ENCODE measurements at regions of chr10 and their contacts with region 1.

Region 1: GRCh38 chr10:112721080-112721698 is 228.9 kb upstream of the TCF7L2 start:
- DNase-seq: no peak
- H3K4me3 ChIP-seq: no peak overlapping the region
- H3K27ac ChIP-seq: no peak overlapping the region
- H3K27me3 ChIP-seq: no peaks in the 10 kb centered on the region
- CTCF ChIP-seq: peak in 55 of 56 donors; percentile 32 to 82 (median 65)

Region 2: DNA sequence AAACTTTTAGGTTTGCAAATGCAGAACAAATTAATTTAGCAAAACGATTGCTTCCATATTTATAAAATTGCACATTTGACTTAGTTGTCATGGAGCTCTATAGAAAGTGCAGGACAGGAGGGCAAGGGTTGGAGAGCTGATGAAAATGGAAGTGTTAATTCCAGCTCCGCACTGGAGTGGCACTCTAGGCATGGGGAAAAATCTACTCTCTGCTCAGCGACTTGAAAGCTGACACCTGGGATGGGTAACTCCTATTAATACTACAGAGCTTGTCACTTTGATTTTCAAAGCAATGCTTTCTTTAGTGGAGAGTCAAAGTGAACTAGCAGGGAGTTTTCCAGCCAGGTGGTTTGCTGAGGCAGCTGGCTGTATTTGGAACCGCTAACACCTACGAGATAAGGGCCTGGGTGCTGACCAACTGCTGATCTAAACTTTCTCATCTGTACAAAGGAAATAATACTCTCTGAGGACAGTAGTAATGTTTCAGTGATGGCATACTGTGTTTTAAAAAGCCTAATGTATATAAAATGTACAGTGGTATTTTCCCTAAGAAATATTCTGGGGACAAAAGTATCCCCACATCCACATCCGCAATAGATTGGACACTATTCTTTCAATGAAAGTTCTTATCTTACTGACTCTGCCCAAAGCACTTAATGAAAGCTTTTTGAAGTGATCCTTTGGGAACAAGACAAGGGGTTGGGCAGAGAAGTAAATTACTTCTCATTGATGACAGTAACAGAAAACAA is 981.9 kb before region 1 on chr10:
- intact Hi-C with region 1: no loop called
- DNase-seq: no peak
- H3K4me3 ChIP-seq: no peak overlapping the region
- H3K27ac ChIP-seq: no peak overlapping the region
- H3K27me3 ChIP-seq: peaks cover 0 to 2% (median 0%) of the 10 kb centered on the region in 45 donors
- CTCF ChIP-seq: no peak

Region 3: GRCh38 chr10:112059220-112059619 is 662.0 kb before region 1 on chr10:
- intact Hi-C with region 1: no loop called
- DNase-seq: no peak
- H3K4me3 ChIP-seq: no peak overlapping the region
- H3K27ac ChIP-seq: no peak overlapping the region
- H3K27me3 ChIP-seq: no peaks in the 10 kb centered on the region
- CTCF ChIP-seq: no peak

Region 4: GRCh38 chr10:112565434-112566053 is 155.6 kb before region 1 on chr10:
- intact Hi-C with region 1: loop called in 1 of 2 experiments (anchors 10 kb)
- DNase-seq: peak in 1 of 10 donors; percentile 24
- H3K4me3 ChIP-seq: no peak overlapping the region
- H3K27ac ChIP-seq: no peak overlapping the region
- H3K27me3 ChIP-seq: no peaks in the 10 kb centered on the region
- CTCF ChIP-seq: peak in 55 of 56 donors; percentile 42 to 86 (median 67)

Region 5: GRCh38 chr10:112613620-112614019 is 107.6 kb before region 1 on chr10:
- intact Hi-C with region 1: no loop called
- DNase-seq: no peak
- H3K4me3 ChIP-seq: no peak overlapping the region
- H3K27ac ChIP-seq: no peak overlapping the region
- H3K27me3 ChIP-seq: no peaks in the 10 kb centered on the region
- CTCF ChIP-seq: no peak

Region 6: GRCh38 chr10:113121153-113121552 is 400.0 kb after region 1 on chr10:
- intact Hi-C with region 1: loop called in 1 of 2 experiments (anchors 5 kb)
- DNase-seq: no peak
- H3K4me3 ChIP-seq: no peak overlapping the region
- H3K27ac ChIP-seq: no peak overlapping the region
- H3K27me3 ChIP-seq: no peaks in the 10 kb centered on the region
- CTCF ChIP-seq: no peak

Measured in dorsolateral prefrontal cortex (tissue), 120 donors.